ENCODE measurements at regions of chr7 and their contacts with region 1.

Region 1: GRCh38 chr7:137656227-137656849 is 190.4 kb downstream of the DGKI start:
- DNase-seq: peak; percentile 79
- H3K4me3 ChIP-seq: no peak overlapping the region
- H3K27ac ChIP-seq: no peak overlapping the region
- H3K4me1 ChIP-seq: peaks cover 0 to 5% (median 0%) of the 10 kb centered on the region in 4 donors
- H3K27me3 ChIP-seq: peaks cover 7% of the 10 kb centered on the region
- CTCF ChIP-seq: peak; percentile 60 to 81 (median 77)
- EP300 ChIP-seq: no peak
- POLR2A ChIP-seq: no peak

Region 2: GRCh38 chr7:136496551-136496950 is 1159.8 kb before region 1 on chr7:
- in situ Hi-C with region 1: no loop called
- intact Hi-C with region 1: no loop called
- DNase-seq: no peak
- H3K4me3 ChIP-seq: no peak overlapping the region
- H3K27ac ChIP-seq: no peak overlapping the region
- H3K4me1 ChIP-seq: no peaks in the 10 kb centered on the region
- H3K27me3 ChIP-seq: no peaks in the 10 kb centered on the region
- CTCF ChIP-seq: no peak
- EP300 ChIP-seq: no peak
- POLR2A ChIP-seq: no peak

Region 3: DNA sequence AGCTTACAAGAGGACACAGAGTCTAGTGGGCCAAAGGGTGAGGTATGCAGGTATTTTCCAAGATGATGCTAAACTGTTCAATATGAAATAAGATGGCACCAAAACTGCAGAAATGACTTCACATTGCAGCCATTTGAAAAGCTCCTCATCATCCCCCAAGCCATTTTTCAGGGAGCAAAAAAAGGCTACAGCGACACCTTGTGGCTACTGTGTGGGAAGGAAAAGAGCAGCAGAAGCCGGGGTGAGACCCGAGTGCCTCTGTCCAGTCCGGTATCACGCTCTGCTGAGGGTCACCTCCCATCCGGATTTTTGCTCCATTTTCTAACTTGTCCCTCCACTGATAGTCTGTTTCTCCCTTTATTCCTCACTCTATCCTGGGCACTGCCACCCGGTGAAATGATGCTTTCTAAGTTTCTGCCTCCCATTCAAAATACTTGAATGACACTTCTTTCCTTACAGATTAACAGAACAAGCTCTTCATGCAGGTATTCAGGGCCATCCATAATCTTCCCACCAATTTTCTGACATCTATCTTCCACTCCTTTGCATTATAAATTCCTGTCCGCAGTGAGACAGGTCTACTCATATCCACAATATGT is 29.8 kb before region 1 on chr7:
- in situ Hi-C with region 1: no loop called
- intact Hi-C with region 1: no loop called
- DNase-seq: peak; percentile 28
- H3K4me3 ChIP-seq: no peak overlapping the region
- H3K27ac ChIP-seq: no peak overlapping the region
- H3K4me1 ChIP-seq: no peaks in the 10 kb centered on the region
- H3K27me3 ChIP-seq: peaks cover 11% of the 10 kb centered on the region
- CTCF ChIP-seq: peak; percentile 48 to 69 (median 57)
- EP300 ChIP-seq: no peak
- POLR2A ChIP-seq: no peak

Region 4: GRCh38 chr7:137873989-137874777 is 217.8 kb after region 1 on chr7:
- in situ Hi-C with region 1: loop called in 1 of 4 experiments (anchors 25 kb)
- intact Hi-C with region 1: no loop called
- DNase-seq: no peak
- H3K4me3 ChIP-seq: no peak overlapping the region
- H3K27ac ChIP-seq: no peak overlapping the region
- H3K4me1 ChIP-seq: peaks cover 0 to 10% (median 6%) of the 10 kb centered on the region in 4 donors
- H3K27me3 ChIP-seq: no peaks in the 10 kb centered on the region
- CTCF ChIP-seq: no peak
- EP300 ChIP-seq: no peak
- POLR2A ChIP-seq: no peak

Region 5: DNA sequence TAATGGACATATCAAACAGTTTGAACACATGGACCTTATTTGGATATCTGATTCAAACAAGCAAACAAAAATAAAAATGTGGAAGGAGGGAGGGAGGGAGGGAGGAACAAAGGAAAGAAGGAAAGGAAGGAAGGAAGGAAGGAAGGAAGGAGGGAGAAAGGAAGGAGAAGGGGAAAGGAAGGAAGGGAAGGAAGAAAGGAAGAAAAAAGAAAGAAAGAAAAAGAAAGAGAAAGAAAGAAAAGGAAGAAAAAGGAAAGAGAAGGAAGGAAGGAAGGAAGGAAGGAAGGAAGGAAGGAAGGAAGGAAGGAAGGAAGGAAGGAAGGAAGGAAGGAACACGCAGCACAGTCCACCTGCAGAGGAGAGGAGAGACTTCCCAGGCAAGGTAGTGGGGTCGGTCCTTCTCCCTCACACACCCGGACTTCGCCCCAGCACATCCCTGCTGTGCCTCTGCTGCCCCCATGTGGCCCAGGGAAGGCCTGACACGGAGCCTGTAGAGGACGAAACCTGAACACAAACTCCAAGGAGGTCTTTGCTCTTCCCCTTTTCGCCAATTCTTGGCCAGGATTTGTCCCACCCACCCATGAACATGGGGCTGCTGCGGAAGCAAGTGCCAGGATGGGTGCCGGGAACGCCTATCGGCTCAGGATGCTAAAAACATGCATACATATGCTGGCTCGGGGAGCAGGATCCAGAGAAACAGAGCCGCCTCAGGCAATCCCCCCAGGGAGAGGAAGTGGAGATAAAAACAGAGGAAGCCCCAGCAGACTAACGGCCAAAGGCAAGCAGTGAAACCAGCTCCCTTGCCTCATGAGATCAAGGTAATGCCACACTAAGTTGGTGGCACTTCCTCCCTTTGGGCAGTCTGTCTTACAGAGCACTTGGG is 242.7 kb after region 1 on chr7:
- in situ Hi-C with region 1: loop called in 3 of 4 experiments (anchors 5 to 10 kb)
- intact Hi-C with region 1: loop called (anchors 5 kb)
- DNase-seq: peak; percentile 81
- H3K4me3 ChIP-seq: peak overlapping the region in 1 of 4 donors; percentile 12
- H3K27ac ChIP-seq: peak overlapping the region in 3 of 4 donors; percentile 2 to 10 (median 10)
- H3K4me1 ChIP-seq: peaks cover 0 to 21% (median 9%) of the 10 kb centered on the region in 4 donors
- H3K27me3 ChIP-seq: no peaks in the 10 kb centered on the region
- CTCF ChIP-seq: peak; percentile 82 to 91 (median 91)
- EP300 ChIP-seq: no peak
- POLR2A ChIP-seq: no peak

Region 6: DNA sequence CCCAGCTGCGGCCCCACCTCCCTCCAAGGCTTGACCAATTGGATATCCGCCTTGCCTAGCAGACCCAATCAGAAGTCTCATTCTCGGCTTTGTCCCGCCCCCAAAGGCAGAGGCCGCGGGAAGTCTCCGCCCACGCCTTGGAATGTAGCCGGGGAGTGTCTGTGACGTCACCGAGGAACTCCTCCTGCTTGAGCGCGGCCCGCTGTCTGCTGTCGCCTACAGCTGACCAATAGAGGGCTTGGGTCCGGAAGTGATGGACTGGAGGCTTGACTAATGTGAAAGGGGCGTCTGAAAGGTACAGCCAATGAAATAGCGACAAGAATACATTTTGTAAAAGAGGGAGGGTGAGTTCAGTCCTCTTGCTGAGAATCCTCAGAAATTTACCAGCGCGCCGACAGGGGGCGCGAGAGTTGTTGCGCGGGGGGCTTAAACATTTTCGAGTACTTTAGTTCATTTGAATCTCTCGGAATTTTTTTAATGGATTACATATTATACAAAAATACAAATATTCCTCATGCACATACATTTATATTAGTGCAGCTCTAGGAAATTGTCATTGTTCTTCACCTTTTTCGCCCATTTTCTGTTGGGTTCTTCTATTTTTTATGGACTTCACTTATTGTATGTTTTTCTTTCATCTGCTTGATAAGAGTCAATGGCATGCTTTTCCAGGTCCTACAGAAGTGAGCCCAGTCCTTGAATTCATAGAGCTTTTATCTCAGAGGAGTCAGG is 345.9 kb after region 1 on chr7:
- in situ Hi-C with region 1: loop called in 2 of 4 experiments (anchors 25 kb)
- intact Hi-C with region 1: no loop called
- DNase-seq: peak; percentile 100
- H3K4me3 ChIP-seq: peak overlapping the region; percentile 74 to 95 (median 82)
- H3K27ac ChIP-seq: peak overlapping the region; percentile 94 to 99 (median 96)
- H3K4me1 ChIP-seq: peaks cover 2 to 34% (median 15%) of the 10 kb centered on the region in 4 donors
- H3K27me3 ChIP-seq: no peaks in the 10 kb centered on the region
- CTCF ChIP-seq: peak; percentile 90 to 97 (median 93)
- EP300 ChIP-seq: no peak
- POLR2A ChIP-seq: no peak

Region 7: GRCh38 chr7:138015096-138015495 is 358.8 kb after region 1 on chr7:
- in situ Hi-C with region 1: loop called (anchors 10 to 25 kb)
- intact Hi-C with region 1: no loop called
- DNase-seq: peak; percentile 20
- H3K4me3 ChIP-seq: no peak overlapping the region
- H3K27ac ChIP-seq: no peak overlapping the region
- H3K4me1 ChIP-seq: no peaks in the 10 kb centered on the region
- H3K27me3 ChIP-seq: no peaks in the 10 kb centered on the region
- CTCF ChIP-seq: no peak
- EP300 ChIP-seq: no peak
- POLR2A ChIP-seq: no peak